Head of caudate nucleus (tissue), 42 donors: ENCODE measurements at regions of chr19 and their contacts with region 1.

Region 1: GRCh38 chr19:39341719-39342604 is at the start of gene SAMD4B:
- DNase-seq: peak; percentile 96 to 100 (median 100)

Region 2: GRCh38 chr19:39296055-39296645 is 45.8 kb before region 1 on chr19 and contains the start of gene IFNL1:
- intact Hi-C with region 1: no loop called
- DNase-seq: peak in 41 of 42 donors; percentile 26 to 87 (median 61)

Region 3: GRCh38 chr19:39390755-39391592 is 49.0 kb after region 1 on chr19 and contains the starts of genes MED29 and PAF1:
- intact Hi-C with region 1: loop called (anchors 10 kb)
- DNase-seq: peak; percentile 88 to 100 (median 98)